H1 (cell line): ENCODE measurements at regions of chr7 and their contacts with region 1.

Region 1: DNA sequence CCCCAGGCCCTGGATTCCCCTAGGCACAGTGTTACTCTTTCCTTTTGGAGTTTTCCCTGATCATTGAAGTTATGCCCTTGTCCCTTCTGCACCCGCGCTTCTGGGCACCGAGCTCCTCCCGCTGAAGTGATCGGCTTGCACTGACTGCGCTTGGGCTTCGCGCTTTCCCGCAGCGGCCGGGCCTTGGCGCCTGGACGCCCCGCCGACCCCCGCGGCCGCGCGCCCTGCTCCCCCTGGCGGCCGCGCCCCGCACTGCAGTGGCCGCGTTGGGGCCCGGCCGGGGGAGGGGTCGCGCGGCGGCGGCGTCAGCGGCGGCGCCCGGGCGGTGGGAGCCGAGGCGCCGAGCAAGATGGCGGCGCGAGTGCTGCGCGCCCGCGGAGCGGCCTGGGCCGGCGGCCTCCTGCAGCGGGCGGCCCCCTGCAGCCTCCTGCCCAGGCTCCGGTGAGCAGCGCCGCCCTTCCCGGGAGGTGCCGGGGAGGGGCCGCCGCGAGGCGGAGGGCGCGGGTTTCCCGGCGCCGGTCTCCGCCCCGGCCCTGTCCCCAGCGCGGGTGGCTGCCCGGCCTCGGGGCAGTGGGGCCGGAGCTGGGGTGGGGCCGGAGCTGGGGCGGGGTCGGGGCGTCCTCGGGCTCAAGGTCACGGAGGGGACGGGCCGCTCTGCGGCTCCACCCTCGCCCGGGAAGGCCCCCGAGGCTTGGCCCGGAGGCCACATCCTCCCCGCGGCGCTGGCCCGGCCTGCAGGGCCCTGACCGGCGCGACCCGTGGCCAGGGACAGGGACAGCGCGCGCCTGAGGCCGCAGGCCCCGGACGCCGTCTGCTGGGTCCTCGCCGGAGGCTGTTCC is at the start of gene NIPSNAP2:
- DNase-seq: peak; percentile 17 to 82
- H3K4me3 ChIP-seq: peak within 1 kb of the TSS; percentile 80 to 99 (median 86)
- H3K27ac ChIP-seq: peak within 1 kb of the TSS; percentile 84
- H3K4me1 ChIP-seq: no peaks in the 10 kb centered on the region
- H3K27me3 ChIP-seq: peaks cover 1 to 13% (median 7%) of the 10 kb centered on the region in 4 experiments; a peak in 5 of 7 replicates
- CTCF ChIP-seq: peak; percentile 65 to 75 (median 71)
- EP300 ChIP-seq: no peak
- POLR2A ChIP-seq: peak; percentile 30 to 65
- RAD21 ChIP-seq: peak; percentile 31 to 65; a peak in 3 of 4 replicates
- total RNA-seq, gene NIPSNAP2: 38.6 and 45.2 TPM in 2 replicates

Region 2: GRCh38 chr7:55827577-55827976 is 136.9 kb before region 1 on chr7:
- CTCF ChIA-PET with region 1: no interaction called
- POLR2A ChIA-PET with region 1: no interaction called
- DNase-seq: no peak
- H3K4me3 ChIP-seq: no peak overlapping the region
- H3K27ac ChIP-seq: no peak overlapping the region
- H3K4me1 ChIP-seq: no peaks in the 10 kb centered on the region; a peak in 1 of 7 replicates
- H3K27me3 ChIP-seq: peaks cover 0 to 1% (median 0%) of the 10 kb centered on the region in 4 experiments; a peak in 1 of 7 replicates
- CTCF ChIP-seq: no peak
- EP300 ChIP-seq: no peak
- POLR2A ChIP-seq: no peak
- RAD21 ChIP-seq: no peak

Region 3: DNA sequence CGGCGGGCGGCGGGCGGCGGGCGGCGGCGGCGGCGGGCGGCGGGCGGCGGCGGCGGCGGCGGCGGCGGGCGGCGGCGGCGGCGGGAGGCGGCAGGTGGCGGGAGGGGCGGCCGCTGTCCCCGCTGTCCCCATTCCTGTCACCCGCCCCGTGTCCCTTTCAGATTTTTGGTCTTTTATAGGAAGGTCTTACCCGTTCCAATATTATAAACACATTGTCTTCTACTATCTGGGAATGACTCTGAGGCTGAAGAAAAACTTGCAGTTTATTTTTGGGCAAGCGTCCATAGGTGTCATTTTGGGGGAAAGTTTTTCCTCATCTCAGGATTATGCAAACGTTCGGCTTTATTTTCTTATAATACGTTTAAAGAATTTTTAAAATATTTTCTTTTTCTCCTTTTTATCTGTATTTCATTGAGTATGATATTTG is 76.6 kb before region 1 on chr7:
- CTCF ChIA-PET with region 1: no interaction called
- POLR2A ChIA-PET with region 1: no interaction called
- DNase-seq: no peak
- H3K4me3 ChIP-seq: peak overlapping the region; percentile 57 to 87 (median 60)
- H3K27ac ChIP-seq: no peak overlapping the region; the same call in 1 of the 2 replicates
- H3K4me1 ChIP-seq: no peaks in the 10 kb centered on the region
- H3K27me3 ChIP-seq: no peaks in the 10 kb centered on the region; a peak in 1 of 7 replicates
- CTCF ChIP-seq: no peak
- EP300 ChIP-seq: no peak
- POLR2A ChIP-seq: no peak
- RAD21 ChIP-seq: no peak

Region 4: DNA sequence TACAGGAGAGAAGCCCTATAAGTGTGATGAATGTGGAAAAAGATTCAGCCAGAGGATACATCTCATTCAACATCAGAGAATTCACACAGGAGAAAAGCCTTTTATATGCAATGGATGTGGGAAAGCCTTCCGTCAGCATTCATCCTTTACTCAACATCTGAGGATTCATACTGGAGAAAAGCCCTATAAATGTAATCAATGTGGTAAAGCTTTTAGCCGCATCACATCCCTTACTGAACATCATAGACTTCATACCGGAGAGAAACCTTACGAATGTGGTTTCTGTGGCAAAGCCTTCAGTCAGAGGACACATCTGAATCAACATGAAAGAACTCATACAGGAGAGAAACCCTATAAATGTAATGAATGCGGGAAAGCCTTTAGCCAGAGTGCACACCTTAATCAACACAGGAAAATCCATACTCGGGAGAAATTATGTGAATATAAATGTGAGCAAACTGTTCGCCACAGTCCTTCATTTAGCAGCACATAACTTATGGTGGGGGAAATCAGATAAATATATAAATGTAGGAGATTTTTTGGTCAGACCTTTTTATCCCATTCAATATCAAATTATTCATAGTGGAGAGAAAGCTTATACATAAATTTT is 24.9 kb before region 1 on chr7:
- CTCF ChIA-PET with region 1: no interaction called
- POLR2A ChIA-PET with region 1: no interaction called
- DNase-seq: no peak
- H3K4me3 ChIP-seq: no peak overlapping the region
- H3K27ac ChIP-seq: no peak overlapping the region
- H3K4me1 ChIP-seq: no peaks in the 10 kb centered on the region
- H3K27me3 ChIP-seq: no peaks in the 10 kb centered on the region
- CTCF ChIP-seq: no peak
- EP300 ChIP-seq: no peak
- POLR2A ChIP-seq: no peak
- RAD21 ChIP-seq: no peak

Region 5: GRCh38 chr7:55975988-55976633 is 11.6 kb after region 1 on chr7:
- CTCF ChIA-PET with region 1: no interaction called
- POLR2A ChIA-PET with region 1: interaction called, 13 read pairs
- DNase-seq: no peak
- H3K4me3 ChIP-seq: no peak overlapping the region
- H3K27ac ChIP-seq: no peak overlapping the region
- H3K4me1 ChIP-seq: no peaks in the 10 kb centered on the region
- H3K27me3 ChIP-seq: no peaks in the 10 kb centered on the region
- CTCF ChIP-seq: no peak
- EP300 ChIP-seq: no peak
- POLR2A ChIP-seq: no peak
- RAD21 ChIP-seq: no peak

Region 6: GRCh38 chr7:55996856-55997500 is 32.5 kb after region 1 on chr7:
- CTCF ChIA-PET with region 1: interaction called, 11 read pairs
- POLR2A ChIA-PET with region 1: interaction called, 3 read pairs
- DNase-seq: no peak
- H3K4me3 ChIP-seq: no peak overlapping the region
- H3K27ac ChIP-seq: no peak overlapping the region
- H3K4me1 ChIP-seq: no peaks in the 10 kb centered on the region
- H3K27me3 ChIP-seq: no peaks in the 10 kb centered on the region
- CTCF ChIP-seq: no peak
- EP300 ChIP-seq: no peak
- POLR2A ChIP-seq: no peak
- RAD21 ChIP-seq: no peak

Region 7: DNA sequence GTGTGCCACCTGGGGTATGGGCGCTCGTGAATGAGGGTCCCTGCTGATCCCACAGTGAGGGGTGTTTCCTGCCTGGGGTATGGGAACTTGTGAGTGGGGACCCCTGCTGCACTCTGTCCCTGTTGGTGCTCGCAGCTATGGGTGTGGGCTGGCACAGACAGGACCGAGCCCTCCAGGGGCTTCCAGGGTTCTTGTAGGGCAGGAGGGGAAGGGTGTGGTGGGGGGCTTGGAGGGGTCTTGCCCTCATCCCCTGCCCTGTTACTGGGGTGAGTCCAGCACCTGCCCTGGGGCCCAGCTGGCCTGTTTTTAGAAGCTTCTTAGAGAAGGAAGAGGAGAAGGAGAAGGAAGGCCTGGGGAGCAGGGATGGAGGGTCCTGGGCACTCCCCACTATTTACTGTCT is 528.7 kb after region 1 on chr7:
- CTCF ChIA-PET with region 1: no interaction called
- POLR2A ChIA-PET with region 1: no interaction called
- DNase-seq: no peak
- H3K4me3 ChIP-seq: no peak overlapping the region
- H3K27ac ChIP-seq: no peak overlapping the region
- H3K4me1 ChIP-seq: no peaks in the 10 kb centered on the region
- H3K27me3 ChIP-seq: no peaks in the 10 kb centered on the region
- CTCF ChIP-seq: no peak
- EP300 ChIP-seq: no peak
- POLR2A ChIP-seq: no peak
- RAD21 ChIP-seq: no peak